Dorsolateral prefrontal cortex (tissue), 120 donors: ENCODE measurements at regions of chr20 and their contacts with region 1.

Region 1: GRCh38 chr20:13953227-13953626 is 37.2 kb downstream of the SEL1L2 start:
- DNase-seq: no peak
- H3K4me3 ChIP-seq: no peak overlapping the region
- H3K27ac ChIP-seq: no peak overlapping the region
- H3K27me3 ChIP-seq: no peaks in the 10 kb centered on the region
- CTCF ChIP-seq: peak in 1 of 56 donors; percentile 24

Region 2: DNA sequence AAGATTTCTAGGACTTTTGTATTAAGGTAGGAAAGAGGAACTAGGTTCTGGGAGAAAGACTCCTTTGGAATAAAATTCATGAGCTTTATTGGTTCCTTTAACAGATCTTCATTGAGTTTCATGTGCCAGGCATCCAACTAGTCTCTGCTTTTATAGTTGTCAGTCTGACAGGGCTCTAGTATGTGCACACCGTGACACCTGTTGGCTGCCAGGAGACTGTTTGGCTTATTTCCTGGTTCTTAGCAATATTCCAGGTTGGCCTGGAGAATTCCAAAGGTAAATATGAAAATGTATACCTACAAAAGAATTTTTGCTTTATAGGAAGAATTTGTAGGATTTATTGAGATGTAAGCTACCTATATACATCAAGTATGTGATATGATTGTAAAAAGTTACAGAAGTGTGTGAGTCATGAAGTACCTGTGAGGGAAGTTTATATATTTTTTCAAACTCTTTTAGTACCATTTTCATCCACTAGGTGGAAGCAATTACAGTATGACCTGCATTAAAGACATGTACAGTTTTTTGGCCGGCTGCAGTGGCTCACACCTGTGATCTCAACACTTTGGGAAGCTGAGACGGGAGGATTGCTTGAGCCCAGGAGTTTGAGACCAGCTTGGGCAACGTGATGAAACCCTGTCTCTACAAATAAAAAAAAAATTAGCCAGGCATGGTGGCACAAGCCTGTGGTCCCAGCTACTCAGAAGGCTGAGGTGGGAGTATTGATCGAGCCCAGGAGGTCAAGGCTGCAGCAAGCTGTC is 133.2 kb before region 1 on chr20:
- intact Hi-C with region 1: loop called in 1 of 2 experiments (anchors 10 kb)
- DNase-seq: peak in 2 of 10 donors; percentile 13 to 25
- H3K4me3 ChIP-seq: no peak overlapping the region
- H3K27ac ChIP-seq: no peak overlapping the region
- H3K27me3 ChIP-seq: no peaks in the 10 kb centered on the region
- CTCF ChIP-seq: peak; percentile 56 to 82 (median 72)

Region 3: DNA sequence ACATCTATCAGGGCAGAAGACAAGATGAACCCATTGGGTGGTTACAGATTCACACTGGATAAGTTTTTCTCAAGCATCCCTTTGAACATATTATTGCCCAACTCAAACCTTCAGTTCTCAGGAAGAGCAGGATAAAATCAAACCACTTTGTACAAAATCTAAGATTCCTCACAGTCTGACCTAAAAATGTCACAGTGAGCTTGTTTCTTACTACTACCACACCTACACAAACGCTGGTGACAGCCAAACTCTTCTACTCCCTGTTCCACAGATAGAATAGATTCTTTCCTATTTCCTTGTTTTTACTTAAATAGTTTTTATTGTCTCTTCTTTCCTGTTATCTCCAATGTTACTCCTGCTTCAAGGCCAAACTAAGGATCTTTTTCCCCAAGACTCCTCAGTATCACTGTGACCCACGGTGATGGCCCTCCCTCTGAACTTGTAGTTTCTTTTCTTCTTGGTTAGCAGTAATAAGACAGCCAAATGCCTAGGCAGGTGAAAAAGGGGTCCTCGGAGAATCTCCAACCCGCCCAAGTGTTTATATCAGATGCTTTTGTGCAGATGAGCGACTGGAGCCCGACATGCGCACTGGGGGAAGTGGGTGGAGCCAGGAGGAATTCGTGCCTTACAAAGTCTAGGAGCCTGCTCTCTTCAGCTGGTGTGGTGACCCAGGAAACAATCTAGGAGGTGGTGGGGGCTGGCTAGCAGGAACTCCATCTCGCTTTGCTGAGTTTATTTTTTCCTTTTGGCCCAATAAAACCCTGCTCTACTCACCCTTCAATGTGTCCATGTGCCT is 16.2 kb before region 1 on chr20:
- intact Hi-C with region 1: loop called in 1 of 2 experiments (anchors 2 kb)
- DNase-seq: no peak
- H3K4me3 ChIP-seq: no peak overlapping the region
- H3K27ac ChIP-seq: no peak overlapping the region
- H3K27me3 ChIP-seq: no peaks in the 10 kb centered on the region
- CTCF ChIP-seq: no peak